Endothelial cell of umbilical vein (primary cell): ENCODE measurements at regions of chr18 and their contacts with region 1.

Region 1: GRCh38 chr18:61502472-61502871 is 169.2 kb downstream of the CDH20 start:
- DNase-seq: peak; percentile 65
- H3K4me3 ChIP-seq: no peak overlapping the region
- H3K27ac ChIP-seq: no peak overlapping the region
- H3K4me1 ChIP-seq: no peaks in the 10 kb centered on the region
- H3K27me3 ChIP-seq: peaks cover 0 to 2% of the 10 kb centered on the region in 2 experiments
- CTCF ChIP-seq: peak; percentile 58 to 64
- POLR2A ChIP-seq: no peak

Region 2: DNA sequence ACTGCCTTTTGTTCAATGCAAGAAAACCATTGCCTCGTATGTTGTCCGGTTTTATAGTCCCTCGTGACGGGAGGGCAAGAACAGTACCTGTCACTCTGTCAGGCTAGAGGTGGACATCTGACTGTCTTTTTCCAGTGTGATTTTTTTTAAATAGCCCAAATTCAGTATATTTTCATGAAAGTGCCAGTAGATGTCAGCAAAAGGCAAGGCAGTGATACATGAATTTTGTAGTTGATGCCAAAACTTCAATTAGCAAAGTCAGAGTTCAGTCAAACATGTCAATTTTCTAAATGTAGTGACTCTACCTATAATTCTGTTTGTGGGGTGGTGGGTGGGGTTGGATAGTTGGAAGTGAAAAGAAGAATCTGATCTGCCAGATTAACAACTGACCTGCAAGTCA is 833.9 kb before region 1 on chr18:
- CTCF ChIA-PET with region 1: interaction called, 21 read pairs
- POLR2A ChIA-PET with region 1: no interaction called
- dilution Hi-C with region 1: no loop called
- intact Hi-C with region 1: loop called (anchors 1 kb)
- DNase-seq: peak; percentile 19
- H3K4me3 ChIP-seq: no peak overlapping the region
- H3K27ac ChIP-seq: no peak overlapping the region
- H3K4me1 ChIP-seq: no peaks in the 10 kb centered on the region
- H3K27me3 ChIP-seq: peaks cover 1 to 5% of the 10 kb centered on the region in 2 experiments
- CTCF ChIP-seq: no peak
- POLR2A ChIP-seq: no peak

Region 3: DNA sequence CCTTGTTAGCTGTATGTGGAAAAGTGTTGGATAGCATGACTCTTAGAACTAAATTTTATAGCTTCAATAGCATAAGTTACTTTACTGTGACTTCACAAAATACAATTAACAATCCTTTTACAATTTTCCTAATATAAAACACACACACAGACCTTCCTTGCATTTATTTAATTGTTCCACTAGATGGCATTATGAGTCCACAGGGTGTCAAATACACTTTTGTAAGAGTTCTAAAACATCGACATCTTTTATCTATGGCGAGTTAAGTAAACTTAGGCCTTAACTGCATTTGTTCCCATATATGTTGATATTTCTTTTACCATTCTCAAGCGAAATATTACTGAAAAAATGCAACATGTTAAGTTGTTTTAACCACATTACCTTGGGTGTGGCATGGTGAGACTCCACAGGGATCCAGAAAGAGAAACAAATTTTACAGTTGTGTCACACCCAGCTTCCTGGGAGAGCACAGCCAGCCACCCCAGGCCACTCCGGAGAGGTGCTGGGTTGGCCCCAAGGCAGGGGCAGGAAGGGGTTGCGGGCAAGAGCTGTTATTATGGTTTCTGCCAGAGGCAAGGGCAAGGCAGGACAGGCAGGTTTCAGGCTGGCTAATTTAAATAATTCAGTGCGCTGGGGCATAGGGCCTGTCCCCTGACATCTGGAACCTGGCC is 817.5 kb before region 1 on chr18:
- CTCF ChIA-PET with region 1: interaction called, 83 read pairs
- POLR2A ChIA-PET with region 1: no interaction called
- dilution Hi-C with region 1: no loop called
- intact Hi-C with region 1: loop called (anchors 1 kb)
- DNase-seq: peak; percentile 57
- H3K4me3 ChIP-seq: no peak overlapping the region
- H3K27ac ChIP-seq: no peak overlapping the region
- H3K4me1 ChIP-seq: no peaks in the 10 kb centered on the region
- H3K27me3 ChIP-seq: peaks cover 0 to 1% of the 10 kb centered on the region in 2 experiments
- CTCF ChIP-seq: peak; percentile 35 to 37
- POLR2A ChIP-seq: no peak

Region 4: GRCh38 chr18:61085761-61086160 is 416.7 kb before region 1 on chr18:
- CTCF ChIA-PET with region 1: interaction called, 14 read pairs
- POLR2A ChIA-PET with region 1: no interaction called
- dilution Hi-C with region 1: no loop called
- intact Hi-C with region 1: loop called (anchors 2 kb)
- DNase-seq: no peak
- H3K4me3 ChIP-seq: no peak overlapping the region
- H3K27ac ChIP-seq: no peak overlapping the region
- H3K4me1 ChIP-seq: no peaks in the 10 kb centered on the region
- H3K27me3 ChIP-seq: no peaks in the 10 kb centered on the region
- CTCF ChIP-seq: no peak
- POLR2A ChIP-seq: no peak

Region 5: DNA sequence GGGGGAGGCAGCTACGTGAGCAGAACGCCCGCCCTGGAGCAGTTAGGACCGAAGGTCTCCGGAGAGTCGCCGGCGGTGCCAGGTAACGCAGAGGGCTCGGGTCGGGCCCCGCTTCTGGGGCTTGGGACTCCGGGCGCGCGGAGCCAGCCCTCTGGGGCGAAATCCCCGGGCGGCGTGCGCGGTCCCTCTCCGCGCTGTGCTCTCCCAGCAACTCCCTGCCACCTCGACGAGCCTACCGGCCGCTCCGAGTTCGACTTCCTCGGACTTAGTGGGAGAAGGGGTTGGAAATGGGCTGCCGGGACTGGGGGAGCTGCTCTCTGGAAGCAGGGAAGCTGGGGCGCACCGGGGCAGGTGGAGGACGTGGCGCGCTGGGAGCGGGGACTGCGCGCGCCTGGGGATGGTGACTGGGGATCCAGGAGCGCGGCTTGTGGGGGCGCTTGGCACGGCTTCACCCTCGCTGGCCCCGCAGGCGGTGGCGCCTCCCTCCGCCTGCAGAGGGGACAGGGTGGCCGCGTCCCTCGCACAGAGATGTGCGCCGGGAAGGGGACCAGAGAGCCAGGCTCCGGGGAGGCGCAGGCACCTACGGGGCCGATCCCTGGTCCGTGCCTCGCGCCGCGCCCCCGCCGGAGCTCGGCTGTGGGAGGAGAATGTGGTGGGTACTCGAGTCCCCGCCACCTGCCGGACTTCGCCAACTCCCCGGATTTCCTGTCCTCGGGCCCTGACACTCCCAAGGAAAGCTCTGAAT is 168.6 kb before region 1 on chr18:
- CTCF ChIA-PET with region 1: interaction called, 27 read pairs
- POLR2A ChIA-PET with region 1: no interaction called
- dilution Hi-C with region 1: no loop called
- intact Hi-C with region 1: no loop called
- DNase-seq: no peak
- H3K4me3 ChIP-seq: peak overlapping the region; percentile 23 to 62 (median 50)
- H3K27ac ChIP-seq: no peak overlapping the region
- H3K4me1 ChIP-seq: peaks cover 11% of the 10 kb centered on the region
- H3K27me3 ChIP-seq: peaks cover 14 to 16% of the 10 kb centered on the region in 2 experiments
- CTCF ChIP-seq: no peak
- POLR2A ChIP-seq: no peak

Region 6: DNA sequence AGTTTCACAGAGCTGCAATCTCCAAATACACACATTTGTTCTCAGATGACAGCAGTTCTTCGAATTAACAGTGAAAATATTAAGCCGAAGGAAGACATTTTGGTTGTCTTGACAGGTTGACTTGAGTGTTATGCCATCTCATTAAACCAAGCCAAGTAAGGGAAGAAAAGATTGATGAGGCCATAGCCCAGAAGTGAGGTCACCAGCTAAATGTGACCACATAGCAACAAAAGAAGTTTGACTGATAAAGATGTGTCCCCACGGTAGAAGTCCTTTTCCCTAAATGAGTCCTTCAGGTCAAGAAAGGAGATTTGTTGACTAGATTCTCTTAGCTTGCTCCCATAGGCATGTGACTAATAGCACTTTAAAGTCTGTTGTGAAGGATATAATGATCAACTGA is 13.1 kb before region 1 on chr18:
- CTCF ChIA-PET with region 1: interaction called, 20 read pairs
- POLR2A ChIA-PET with region 1: no interaction called
- dilution Hi-C with region 1: no loop called
- intact Hi-C with region 1: no loop called
- DNase-seq: no peak
- H3K4me3 ChIP-seq: no peak overlapping the region
- H3K27ac ChIP-seq: no peak overlapping the region
- H3K4me1 ChIP-seq: no peaks in the 10 kb centered on the region
- H3K27me3 ChIP-seq: peaks cover 2 to 11% of the 10 kb centered on the region in 2 experiments
- CTCF ChIP-seq: no peak
- POLR2A ChIP-seq: no peak

Region 7: DNA sequence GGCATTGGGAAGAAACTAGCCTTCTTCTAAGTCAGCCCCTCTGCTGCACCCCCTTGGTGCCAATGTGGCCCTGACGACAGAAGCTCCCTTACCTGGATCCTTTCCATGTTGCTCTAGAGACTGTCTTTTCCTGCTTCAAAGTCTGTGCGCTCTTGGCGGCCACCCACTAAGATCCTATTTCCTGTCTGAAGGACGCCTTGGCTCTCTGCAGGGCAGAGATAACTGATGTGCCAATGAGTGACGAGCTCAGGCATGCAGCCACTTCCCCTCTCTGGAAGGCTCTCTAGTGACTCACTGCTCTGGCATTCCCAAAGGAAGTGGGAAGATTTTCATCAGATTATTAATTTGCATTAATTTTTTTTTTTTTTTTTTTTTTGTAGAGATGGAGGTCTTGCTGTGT is 104.3 kb after region 1 on chr18:
- CTCF ChIA-PET with region 1: no interaction called
- POLR2A ChIA-PET with region 1: no interaction called
- dilution Hi-C with region 1: no loop called
- intact Hi-C with region 1: no loop called
- DNase-seq: peak; percentile 98
- H3K4me3 ChIP-seq: peak overlapping the region in 1 of 3 experiments; percentile 6
- H3K27ac ChIP-seq: peak overlapping the region; percentile 97
- H3K4me1 ChIP-seq: peaks cover 71% of the 10 kb centered on the region
- H3K27me3 ChIP-seq: no peaks in the 10 kb centered on the region
- CTCF ChIP-seq: no peak
- POLR2A ChIP-seq: peak; percentile 87